Transverse colon (tissue), 4 donors: ENCODE measurements at regions of chr15 and their contacts with region 1.

Region 1: GRCh38 chr15:49675041-49675440 is 54.2 kb downstream of the DTWD1 start:
- DNase-seq: no peak
- H3K4me3 ChIP-seq: no peak overlapping the region
- H3K27ac ChIP-seq: no peak overlapping the region
- H3K4me1 ChIP-seq: peaks cover 0 to 9% (median 2%) of the 10 kb centered on the region in 4 donors
- H3K27me3 ChIP-seq: no peaks in the 10 kb centered on the region
- CTCF ChIP-seq: no peak
- EP300 ChIP-seq: no peak
- POLR2A ChIP-seq: no peak

Region 2: DNA sequence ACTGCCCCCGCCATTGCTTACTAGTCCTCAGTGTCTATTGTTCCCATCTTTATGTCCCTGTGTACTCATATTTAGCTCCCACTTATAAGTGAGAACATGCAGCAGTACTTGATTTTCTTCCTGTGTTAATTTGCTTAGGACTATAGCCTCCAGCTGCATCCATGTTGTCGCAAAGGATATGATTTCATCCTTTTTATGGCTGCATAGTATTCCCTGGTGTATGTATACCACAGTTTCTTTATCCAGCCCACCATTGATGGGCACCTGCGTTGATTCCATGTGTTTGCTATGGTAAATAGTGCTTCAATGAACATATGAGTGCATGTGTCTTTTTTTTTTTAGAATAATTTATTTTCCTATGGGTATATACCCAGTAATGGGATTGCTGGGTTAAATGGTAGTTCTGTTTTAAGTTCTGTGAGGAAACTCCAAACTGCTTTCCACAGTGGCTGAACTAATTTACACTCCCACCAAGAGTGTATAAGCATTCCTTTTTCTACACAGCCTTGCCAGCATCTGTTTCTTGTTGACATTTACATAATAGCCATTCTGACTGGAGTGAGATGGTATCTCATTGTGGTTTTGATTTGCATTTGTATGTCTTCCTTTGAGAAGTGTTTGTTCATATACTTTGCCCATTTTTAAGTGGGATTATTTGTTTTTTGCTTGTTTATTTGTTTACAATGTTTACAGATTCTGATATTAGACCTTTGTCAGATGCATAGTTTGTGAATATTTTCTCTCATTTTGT is 451.3 kb before region 1 on chr15:
- in situ Hi-C with region 1: no loop called
- intact Hi-C with region 1: loop called (anchors 5 kb)
- DNase-seq: no peak
- H3K4me3 ChIP-seq: no peak overlapping the region
- H3K27ac ChIP-seq: no peak overlapping the region
- H3K4me1 ChIP-seq: no peaks in the 10 kb centered on the region
- H3K27me3 ChIP-seq: no peaks in the 10 kb centered on the region
- CTCF ChIP-seq: no peak
- EP300 ChIP-seq: no peak
- POLR2A ChIP-seq: no peak